Activated T-helper 1 cell treated with anti-CD3 and anti-CD28 coated beads, Interleukin-12 subunit alpha, Interleukin-12 subunit beta, Interleukin-2, Interleukin-4 antibody, amounts not matched to agents 30 ng/mL and 10 ng/mL and 1 ng/mL, durations not matched to agents 14 hours and 24 hours and 36 hours (primary cell): ENCODE measurements at regions of chr3 and their contacts with region 1.

Region 1: GRCh38 chr3:108835101-108835500 is 12.5 kb downstream of the TRAT1 start:
- DNase-seq: peak; percentile 47
- H3K4me3 Mint-ChIP-seq: peak overlapping the region; percentile 86
- H3K27ac Mint-ChIP-seq: peak overlapping the region; percentile 99
- H3K4me1 Mint-ChIP-seq: peaks cover 92% of the 10 kb centered on the region
- H3K27me3 Mint-ChIP-seq: no peaks in the 10 kb centered on the region

Region 2: DNA sequence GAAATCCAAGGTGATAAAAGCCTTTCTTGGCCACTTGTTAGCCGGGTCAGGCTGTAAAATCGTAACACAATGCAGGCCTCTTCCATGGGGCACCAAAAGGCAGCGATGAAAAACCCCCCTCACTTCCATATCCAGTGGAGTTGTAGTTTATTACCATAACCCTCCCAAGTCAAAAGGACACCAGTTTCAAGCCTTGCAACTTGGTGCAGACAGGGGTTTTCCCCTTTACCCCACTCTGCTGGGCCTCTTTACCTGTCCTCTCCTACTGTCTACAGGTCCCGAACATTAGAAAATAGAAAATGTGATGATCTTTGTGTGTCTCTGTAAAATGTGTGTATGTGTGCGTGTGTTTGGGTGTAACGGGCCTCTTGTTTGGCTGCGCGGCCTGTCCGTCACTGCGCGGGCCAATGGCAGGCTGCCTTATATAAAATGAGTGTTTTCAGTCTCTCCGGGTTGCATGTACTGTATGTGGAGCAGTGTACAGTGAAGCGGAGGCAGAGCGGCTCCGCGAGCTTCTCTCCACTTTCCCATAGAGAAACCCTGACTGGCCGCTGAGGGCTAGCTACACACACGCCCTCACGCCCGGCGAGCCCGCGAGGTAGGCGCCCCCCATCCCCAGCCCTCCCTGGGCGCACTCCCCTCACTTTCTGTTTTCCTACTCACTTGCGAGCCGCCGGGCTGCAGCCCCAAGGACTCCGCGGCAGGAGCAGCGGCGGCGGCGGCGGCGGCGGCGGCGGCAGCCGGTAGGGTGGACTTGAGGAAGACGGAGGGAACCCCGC is 1312.4 kb before region 1 on chr3 and contains the start of gene BBX:
- intact Hi-C with region 1: loop called (anchors 5 kb)
- DNase-seq: peak; percentile 88
- H3K4me3 Mint-ChIP-seq: peak within 1 kb of the TSS; percentile 92
- H3K27ac Mint-ChIP-seq: peak within 1 kb of the TSS; percentile 96
- H3K4me1 Mint-ChIP-seq: peaks cover 32% of the 10 kb centered on the region
- H3K27me3 Mint-ChIP-seq: peaks cover 4% of the 10 kb centered on the region
- total RNA-seq, gene BBX: 38.1 and 45.1 TPM in 2 replicates

Region 3: GRCh38 chr3:108117241-108117775 is 717.8 kb before region 1 on chr3:
- intact Hi-C with region 1: no loop called
- DNase-seq: no peak
- H3K4me3 Mint-ChIP-seq: no peak overlapping the region
- H3K27ac Mint-ChIP-seq: peak overlapping the region; percentile 19
- H3K4me1 Mint-ChIP-seq: peaks cover 27% of the 10 kb centered on the region
- H3K27me3 Mint-ChIP-seq: peaks cover 8% of the 10 kb centered on the region

Region 4: DNA sequence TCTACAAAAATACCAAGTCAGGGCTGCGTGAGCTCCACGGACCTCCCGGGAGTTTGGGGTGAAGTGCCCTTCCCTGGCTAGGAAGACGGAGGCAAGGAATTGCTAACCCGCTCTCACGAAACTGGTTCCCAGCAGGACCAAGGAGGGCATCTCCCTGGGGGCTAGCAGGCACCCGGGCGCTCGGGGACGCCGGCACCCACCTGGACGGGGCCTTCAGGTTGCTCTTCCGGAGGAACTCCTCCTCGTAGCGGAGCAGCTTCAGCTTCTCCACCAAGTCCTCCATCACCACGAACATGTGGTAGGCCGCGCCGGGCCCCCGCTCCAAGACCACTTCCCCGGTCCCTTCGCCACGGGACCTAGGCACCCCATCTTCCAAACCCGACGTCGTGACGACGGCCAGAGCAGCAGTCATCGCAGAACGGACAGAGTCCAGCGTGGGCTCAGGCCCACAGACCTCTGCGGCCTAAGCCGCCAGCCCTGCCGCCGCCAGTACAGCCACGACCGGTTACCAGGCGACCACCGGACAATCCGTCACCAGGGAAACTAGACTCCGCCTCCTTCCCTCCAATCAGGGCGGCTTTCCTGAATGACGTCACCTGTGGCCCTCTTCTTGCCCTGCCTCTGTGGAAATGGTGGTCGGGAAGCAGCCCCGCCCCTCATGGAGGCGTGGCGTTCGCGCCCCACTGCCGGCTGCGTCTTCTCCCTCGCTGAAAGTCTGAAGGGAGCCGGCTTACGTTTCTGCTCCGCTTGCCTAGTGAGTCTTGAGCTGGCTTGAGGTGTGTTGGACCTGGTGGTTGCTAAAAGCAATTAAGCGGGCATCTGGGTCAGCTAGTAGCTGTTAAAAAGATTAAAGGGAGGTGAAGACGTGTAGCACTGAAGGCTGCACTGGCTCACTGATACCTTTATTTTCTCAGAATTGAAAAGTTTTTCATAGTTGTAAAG is 612.9 kb before region 1 on chr3 and contains the start of gene IFT57:
- intact Hi-C with region 1: loop called (anchors 5 kb)
- DNase-seq: peak; percentile 94
- H3K4me3 Mint-ChIP-seq: peak within 1 kb of the TSS; percentile 87
- H3K27ac Mint-ChIP-seq: peak within 1 kb of the TSS; percentile 93
- H3K4me1 Mint-ChIP-seq: peaks cover 51% of the 10 kb centered on the region
- H3K27me3 Mint-ChIP-seq: no peaks in the 10 kb centered on the region
- total RNA-seq, gene IFT57: 27.0 and 34.9 TPM in 2 replicates

Region 5: GRCh38 chr3:108662130-108662738 is 172.9 kb before region 1 on chr3:
- intact Hi-C with region 1: loop called (anchors 1 kb)
- DNase-seq: peak; percentile 17
- H3K4me3 Mint-ChIP-seq: no peak overlapping the region
- H3K27ac Mint-ChIP-seq: no peak overlapping the region
- H3K4me1 Mint-ChIP-seq: peaks cover 17% of the 10 kb centered on the region
- H3K27me3 Mint-ChIP-seq: no peaks in the 10 kb centered on the region

Region 6: GRCh38 chr3:108818404-108818803 is 16.7 kb before region 1 on chr3:
- intact Hi-C with region 1: loop called (anchors 1 kb)
- DNase-seq: peak; percentile 60
- H3K4me3 Mint-ChIP-seq: peak overlapping the region; percentile 58
- H3K27ac Mint-ChIP-seq: peak overlapping the region; percentile 18
- H3K4me1 Mint-ChIP-seq: peaks cover 45% of the 10 kb centered on the region
- H3K27me3 Mint-ChIP-seq: no peaks in the 10 kb centered on the region

Region 7: GRCh38 chr3:108914774-108915641 is 79.9 kb after region 1 on chr3:
- intact Hi-C with region 1: loop called (anchors 1 kb)
- DNase-seq: peak; percentile 56
- H3K4me3 Mint-ChIP-seq: peak overlapping the region; percentile 12
- H3K27ac Mint-ChIP-seq: peak overlapping the region; percentile 61
- H3K4me1 Mint-ChIP-seq: peaks cover 18% of the 10 kb centered on the region
- H3K27me3 Mint-ChIP-seq: peaks cover 15% of the 10 kb centered on the region